ENCODE measurements at regions of chr5 and their contacts with region 1.

Region 1: GRCh38 chr5:170070556-170071412 is 34.9 kb upstream of the FOXI1 start:
- DNase-seq: no peak
- H3K4me3 Mint-ChIP-seq: no peak overlapping the region
- H3K27ac Mint-ChIP-seq: no peak overlapping the region
- H3K4me1 Mint-ChIP-seq: no peaks in the 10 kb centered on the region
- H3K27me3 Mint-ChIP-seq: no peaks in the 10 kb centered on the region

Region 2: DNA sequence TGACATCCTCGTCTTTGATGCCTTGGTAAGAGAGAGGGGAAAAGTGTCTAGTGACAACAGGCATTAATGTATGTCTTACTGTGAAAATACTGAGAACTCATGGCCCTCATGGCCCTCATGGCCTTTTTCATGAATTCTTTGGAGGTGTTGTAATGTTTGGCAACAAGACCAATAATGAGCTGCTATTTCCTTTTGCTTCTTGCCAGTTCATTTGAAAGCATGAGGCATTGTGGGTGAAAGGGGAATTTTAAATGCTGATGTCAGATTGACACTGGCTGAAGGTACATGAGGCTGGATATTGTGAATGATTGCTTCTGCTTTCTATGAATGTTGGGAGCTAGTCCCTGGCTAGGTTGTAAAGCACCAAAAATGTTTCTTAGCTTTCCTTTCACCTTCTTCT is 354.5 kb before region 1 on chr5:
- CTCF ChIA-PET with region 1: no interaction called
- POLR2A ChIA-PET with region 1: no interaction called
- intact Hi-C with region 1: loop called (anchors 10 kb)
- DNase-seq: no peak
- H3K4me3 Mint-ChIP-seq: no peak overlapping the region
- H3K27ac Mint-ChIP-seq: peak overlapping the region; percentile 43
- H3K4me1 Mint-ChIP-seq: peaks cover 21% of the 10 kb centered on the region
- H3K27me3 Mint-ChIP-seq: no peaks in the 10 kb centered on the region

Region 3: DNA sequence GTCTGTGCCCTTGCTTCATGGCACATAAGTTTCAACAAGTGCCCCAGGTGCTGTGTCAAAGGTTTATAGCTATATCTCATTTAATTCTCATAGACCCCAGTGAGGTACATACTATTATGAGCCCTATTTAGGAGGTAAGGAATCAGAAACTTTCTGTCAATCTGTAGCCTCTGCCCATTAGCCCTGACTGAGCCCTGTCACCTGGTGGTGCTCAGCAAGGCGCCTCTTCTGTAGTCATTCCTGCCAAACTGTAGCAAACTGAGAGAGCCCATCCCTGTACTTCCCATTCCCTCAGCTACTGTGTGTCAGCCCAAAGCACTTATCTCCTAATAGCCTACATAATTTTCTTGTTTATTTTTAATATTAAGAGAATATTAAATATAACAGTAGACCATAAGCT is 11.6 kb before region 1 on chr5:
- CTCF ChIA-PET with region 1: interaction called, 20 read pairs
- POLR2A ChIA-PET with region 1: no interaction called
- intact Hi-C with region 1: no loop called
- DNase-seq: no peak
- H3K4me3 Mint-ChIP-seq: no peak overlapping the region
- H3K27ac Mint-ChIP-seq: no peak overlapping the region
- H3K4me1 Mint-ChIP-seq: no peaks in the 10 kb centered on the region
- H3K27me3 Mint-ChIP-seq: no peaks in the 10 kb centered on the region

Measured in activated CD4-positive, alpha-beta memory T cell treated with anti-CD3 and anti-CD28 coated beads for 36 hours (primary cell).